H1 (cell line): ENCODE measurements at regions of chr5 and their contacts with region 1.

Region 1: DNA sequence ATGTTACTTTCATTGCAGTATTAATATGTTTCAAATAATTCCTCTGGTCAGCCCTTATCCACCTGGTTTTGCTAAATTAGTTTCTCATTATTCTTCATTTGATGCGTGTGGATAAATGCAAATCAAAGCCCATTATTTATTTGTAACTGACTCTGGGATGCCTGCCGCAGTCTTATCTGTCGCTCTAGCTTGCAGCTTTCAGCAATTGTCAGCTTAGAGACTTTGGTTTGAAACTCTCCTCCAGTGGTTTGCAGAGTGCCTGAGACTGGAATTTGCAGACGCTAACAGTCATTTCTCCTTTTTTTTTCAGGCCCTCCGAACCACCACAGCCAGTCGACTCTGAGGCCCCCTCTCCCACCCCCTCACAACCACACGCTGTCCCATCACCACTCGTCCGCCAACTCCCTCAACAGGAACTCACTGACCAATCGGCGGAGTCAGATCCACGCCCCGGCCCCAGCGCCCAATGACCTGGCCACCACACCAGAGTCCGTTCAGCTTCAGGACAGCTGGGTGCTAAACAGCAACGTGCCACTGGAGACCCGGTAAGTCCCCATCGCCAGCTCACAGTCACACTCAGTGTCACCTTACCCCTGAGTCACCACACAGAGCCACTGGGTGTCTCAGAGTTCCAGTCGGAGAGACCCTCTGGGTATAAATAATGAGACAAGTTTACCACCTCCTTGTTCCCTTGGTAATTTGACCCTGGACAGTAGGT is 339.0 kb upstream of the WWC1 start:
- DNase-seq: no peak
- H3K4me3 ChIP-seq: no peak overlapping the region
- H3K27ac ChIP-seq: no peak overlapping the region
- H3K4me1 ChIP-seq: peaks cover 0 to 7% (median 4%) of the 10 kb centered on the region in 4 experiments; a peak in 6 of 7 replicates
- H3K27me3 ChIP-seq: no peaks in the 10 kb centered on the region
- CTCF ChIP-seq: no peak
- EP300 ChIP-seq: no peak
- POLR2A ChIP-seq: no peak
- RAD21 ChIP-seq: no peak

Region 2: GRCh38 chr5:167964529-167964928 is 12.1 kb after region 1 on chr5:
- CTCF ChIA-PET with region 1: interaction called, 13 read pairs
- POLR2A ChIA-PET with region 1: no interaction called
- DNase-seq: no peak
- H3K4me3 ChIP-seq: no peak overlapping the region
- H3K27ac ChIP-seq: no peak overlapping the region
- H3K4me1 ChIP-seq: peaks cover 0 to 11% (median 3%) of the 10 kb centered on the region in 4 experiments; a peak in 5 of 7 replicates
- H3K27me3 ChIP-seq: no peaks in the 10 kb centered on the region
- CTCF ChIP-seq: peak in 2 of 3 experiments; percentile 17 to 40; a peak in 2 of 4 replicates
- EP300 ChIP-seq: no peak
- POLR2A ChIP-seq: no peak
- RAD21 ChIP-seq: no peak; a peak in 1 of 4 replicates

Region 3: DNA sequence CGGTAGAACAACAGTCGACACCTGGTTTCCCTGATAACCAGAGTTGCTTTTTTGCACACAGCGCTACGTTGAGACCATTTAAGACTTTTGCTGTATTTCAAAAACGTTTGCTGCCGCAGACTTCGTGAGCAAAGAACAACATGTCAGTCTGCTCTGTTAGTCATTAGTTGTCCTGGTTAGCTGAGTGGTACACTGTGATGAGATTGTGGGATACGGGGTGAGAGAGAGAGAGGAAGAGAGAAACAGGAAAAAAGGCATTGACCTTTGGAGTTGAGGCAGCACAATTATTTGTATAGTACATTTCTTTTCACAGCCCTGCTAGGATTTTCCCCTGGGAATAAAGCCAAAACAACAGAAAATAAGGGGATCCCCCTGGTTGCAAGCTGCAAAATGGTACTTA is 32.9 kb after region 1 on chr5:
- CTCF ChIA-PET with region 1: no interaction called
- POLR2A ChIA-PET with region 1: no interaction called
- DNase-seq: no peak
- H3K4me3 ChIP-seq: no peak overlapping the region
- H3K27ac ChIP-seq: no peak overlapping the region
- H3K4me1 ChIP-seq: peaks cover 2 to 10% (median 5%) of the 10 kb centered on the region in 4 experiments; a peak in 4 of 7 replicates
- H3K27me3 ChIP-seq: no peaks in the 10 kb centered on the region
- CTCF ChIP-seq: no peak
- EP300 ChIP-seq: no peak
- POLR2A ChIP-seq: no peak
- RAD21 ChIP-seq: no peak